Motor neuron (in vitro differentiated cells): ENCODE measurements at regions of chr12 and their contacts with region 1.

Region 1: GRCh38 chr12:60494244-60494643 is 898.4 kb downstream of the SLC16A7 start:
- ATAC-seq: peak in 4 of 8 experiments; percentile 49 to 78 (median 76)
- H3K4me3 ChIP-seq: no peak overlapping the region
- H3K27ac ChIP-seq: no peak overlapping the region
- H3K4me1 ChIP-seq: no peaks in the 10 kb centered on the region

Region 2: GRCh38 chr12:59431266-59431665 is 1063.0 kb before region 1 on chr12:
- in situ Hi-C with region 1: loop called in 1 of 9 experiments (anchors 25 kb)
- ATAC-seq: peak in 3 of 8 experiments; percentile 36 to 49 (median 38)
- H3K4me3 ChIP-seq: no peak overlapping the region
- H3K27ac ChIP-seq: no peak overlapping the region
- H3K4me1 ChIP-seq: no peaks in the 10 kb centered on the region

Region 3: GRCh38 chr12:60106214-60106613 is 388.0 kb before region 1 on chr12:
- in situ Hi-C with region 1: loop called in 1 of 9 experiments (anchors 25 kb)
- ATAC-seq: peak in 2 of 8 experiments; percentile 18 to 30
- H3K4me3 ChIP-seq: no peak overlapping the region
- H3K27ac ChIP-seq: no peak overlapping the region
- H3K4me1 ChIP-seq: no peaks in the 10 kb centered on the region

Region 4: DNA sequence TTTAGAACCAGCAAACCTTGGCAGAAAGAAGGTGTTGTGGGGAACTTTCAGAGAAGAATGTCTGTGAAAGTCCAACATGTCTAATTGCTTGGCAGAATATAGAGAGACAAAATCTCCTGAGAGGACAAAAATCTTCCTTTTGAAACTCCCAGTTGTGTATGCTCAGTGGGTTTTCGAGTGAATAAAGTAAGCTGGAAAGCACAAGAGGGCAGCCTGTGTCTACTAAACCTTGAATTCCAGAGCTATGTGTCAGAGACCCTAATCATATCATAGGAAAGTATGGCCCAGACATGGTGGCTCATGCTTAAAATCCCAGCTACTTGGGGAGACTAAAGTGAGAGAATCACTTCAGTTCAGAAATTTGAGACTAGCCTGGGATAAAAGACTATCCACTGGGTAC is 237.2 kb before region 1 on chr12:
- in situ Hi-C with region 1: loop called in 1 of 9 experiments (anchors 25 kb)
- ATAC-seq: peak in 4 of 8 experiments; percentile 41 to 85 (median 55)
- H3K4me3 ChIP-seq: no peak overlapping the region
- H3K27ac ChIP-seq: no peak overlapping the region
- H3K4me1 ChIP-seq: peaks cover 0 to 5% of the 10 kb centered on the region in 2 donors